Activated T-helper 1 cell treated with anti-CD3 and anti-CD28 coated beads, Interleukin-12 subunit alpha, Interleukin-12 subunit beta, Interleukin-2, Interleukin-4 antibody, amounts not matched to agents 30 ng/mL and 10 ng/mL and 1 ng/mL, durations not matched to agents 14 hours and 24 hours and 36 hours (primary cell): ENCODE measurements at regions of chr17 and their contacts with region 1.

Region 1: GRCh38 chr17:80720610-80721577 is 176.3 kb downstream of the RPTOR start:
- DNase-seq: peak; percentile 67
- H3K4me3 Mint-ChIP-seq: peak overlapping the region; percentile 54
- H3K27ac Mint-ChIP-seq: peak overlapping the region; percentile 89
- H3K4me1 Mint-ChIP-seq: peaks cover 62% of the 10 kb centered on the region
- H3K27me3 Mint-ChIP-seq: no peaks in the 10 kb centered on the region

Region 2: DNA sequence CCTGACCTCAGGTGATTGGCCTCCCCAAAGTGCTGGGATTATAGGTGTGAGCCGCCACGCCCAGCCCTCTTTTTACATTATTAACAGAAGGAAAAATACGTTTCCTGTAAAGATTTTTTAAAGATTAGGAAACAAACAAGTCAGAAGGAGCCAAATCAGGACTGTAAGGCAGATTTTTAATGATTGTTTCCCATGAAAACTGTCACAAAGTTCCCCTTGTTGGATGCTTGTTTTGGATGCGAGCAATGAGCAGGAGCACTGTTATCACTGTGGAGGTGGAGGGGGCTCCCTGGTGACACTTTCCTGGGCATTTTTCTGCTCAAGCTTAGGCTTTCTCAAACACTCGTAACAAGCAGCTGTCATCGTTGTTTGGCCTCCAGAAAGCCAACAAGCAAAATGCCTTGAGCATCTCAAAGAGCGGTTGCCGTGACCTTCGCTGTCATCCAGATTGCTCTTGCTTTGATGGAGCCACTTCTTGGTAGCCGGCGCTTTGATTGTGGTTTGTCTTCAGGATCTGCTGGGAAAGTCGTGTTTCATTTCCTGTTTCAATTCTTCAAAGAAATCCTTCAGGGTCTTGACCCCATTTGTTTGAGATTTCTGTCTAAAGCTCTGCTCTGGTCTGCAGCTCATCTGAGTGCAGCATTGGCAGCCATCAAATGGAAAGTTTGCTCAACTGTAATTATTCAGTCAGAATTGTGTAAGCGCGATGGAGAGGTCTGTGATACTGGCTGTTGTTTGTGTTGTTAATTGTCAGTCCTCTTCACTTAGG is 47.6 kb before region 1 on chr17:
- intact Hi-C with region 1: loop called (anchors 5 kb)
- DNase-seq: no peak
- H3K4me3 Mint-ChIP-seq: peak overlapping the region; percentile 74
- H3K27ac Mint-ChIP-seq: peak overlapping the region; percentile 72
- H3K4me1 Mint-ChIP-seq: peaks cover 89% of the 10 kb centered on the region
- H3K27me3 Mint-ChIP-seq: no peaks in the 10 kb centered on the region

Region 3: DNA sequence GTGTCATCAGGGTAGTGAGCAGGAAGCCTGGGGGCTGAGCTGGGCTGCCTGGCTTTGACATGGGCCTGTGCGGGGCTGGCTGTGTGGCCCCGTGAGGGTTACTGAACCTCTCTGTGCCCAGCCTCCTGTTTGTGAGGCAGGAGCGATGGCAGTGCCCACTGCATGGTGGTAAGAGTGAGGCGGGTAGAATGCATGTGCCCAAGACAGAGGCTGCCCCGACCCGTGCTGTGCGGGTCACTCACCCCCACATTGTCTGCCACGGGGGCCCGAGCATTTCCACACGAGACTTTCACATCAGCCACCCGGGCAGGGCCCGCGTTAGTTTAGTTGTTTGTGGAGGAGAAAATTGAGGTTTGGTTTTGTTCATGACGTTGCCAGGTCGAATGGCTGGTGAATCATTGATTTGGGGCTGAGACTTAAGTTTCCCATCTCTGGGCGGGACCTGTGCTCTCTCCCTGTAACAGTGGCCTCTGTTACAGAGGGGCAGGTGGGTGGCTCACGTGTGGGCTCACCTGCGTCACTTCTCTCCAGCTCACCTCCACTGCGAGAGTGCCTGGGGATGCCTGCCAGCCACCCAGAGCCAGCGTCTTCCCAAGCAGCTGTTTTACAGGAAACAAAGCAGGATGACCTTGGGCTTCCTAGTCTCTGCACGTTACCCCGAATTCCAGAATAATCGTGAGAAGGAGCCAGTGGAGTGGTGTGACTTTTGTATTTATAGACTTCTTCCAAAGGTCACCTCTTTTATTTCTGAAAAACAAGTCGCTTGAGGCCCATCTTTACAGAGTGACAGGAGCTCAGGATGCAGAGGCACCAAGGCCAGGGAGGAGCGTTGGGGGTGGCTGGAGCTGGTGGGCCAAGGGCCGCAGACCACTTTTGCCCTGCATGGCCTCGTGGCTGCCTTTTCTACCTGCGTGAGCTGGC is 25.6 kb before region 1 on chr17:
- intact Hi-C with region 1: no loop called
- DNase-seq: no peak
- H3K4me3 Mint-ChIP-seq: no peak overlapping the region
- H3K27ac Mint-ChIP-seq: peak overlapping the region; percentile 65
- H3K4me1 Mint-ChIP-seq: peaks cover 58% of the 10 kb centered on the region
- H3K27me3 Mint-ChIP-seq: no peaks in the 10 kb centered on the region